ENCODE measurements at regions of chr3 and their contacts with region 1.

Region 1: DNA sequence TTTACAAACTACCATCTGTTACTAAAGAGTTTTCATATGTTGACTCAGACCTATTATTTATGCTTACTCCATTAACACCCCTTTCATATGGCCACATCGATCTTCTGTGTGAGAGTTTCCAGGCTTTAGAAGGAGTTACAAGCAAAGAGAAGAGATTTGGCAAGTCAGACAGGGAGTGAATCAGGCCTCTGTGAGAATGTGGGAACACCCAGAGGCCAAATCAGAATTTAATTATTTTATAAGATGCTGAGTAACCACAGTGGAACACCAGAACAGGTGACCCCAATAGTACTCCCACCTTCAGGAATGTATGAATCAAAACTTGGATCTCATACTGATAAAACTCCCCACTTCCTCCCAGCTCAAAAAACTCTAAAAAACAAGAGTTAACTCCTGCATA is 42.0 kb downstream of the IFT57 start:
- DNase-seq: no peak
- ATAC-seq: no peak
- H3K4me3 Mint-ChIP-seq: no peak overlapping the region
- H3K27ac Mint-ChIP-seq: no peak overlapping the region
- H3K4me1 Mint-ChIP-seq: peaks cover 45% of the 10 kb centered on the region
- H3K27me3 Mint-ChIP-seq: no peaks in the 10 kb centered on the region
- CTCF ChIP-seq: no peak

Region 2: DNA sequence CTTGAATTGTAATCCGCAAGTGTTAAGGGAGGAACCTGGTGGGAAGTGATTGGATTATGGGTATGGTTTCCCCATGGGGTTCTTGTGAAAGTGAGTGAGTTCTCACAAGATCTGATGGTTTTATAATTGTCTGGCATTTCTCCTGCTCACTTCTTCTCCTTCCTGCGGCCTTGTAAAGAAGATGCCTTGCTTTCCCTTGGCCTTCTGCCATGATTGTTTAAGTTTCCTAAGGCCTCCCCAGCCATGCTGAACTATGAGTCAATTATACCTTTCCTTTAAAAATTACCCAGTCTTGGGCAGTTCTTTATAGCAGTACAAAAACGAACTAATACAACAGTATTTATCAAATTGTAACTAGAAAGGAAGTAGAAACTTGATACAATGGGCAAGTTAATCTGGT is 10.2 kb after region 1 on chr3:
- CTCF ChIA-PET with region 1: no interaction called
- POLR2A ChIA-PET with region 1: no interaction called
- intact Hi-C with region 1: loop called (anchors 2 kb)
- DNase-seq: no peak
- ATAC-seq: no peak
- H3K4me3 Mint-ChIP-seq: no peak overlapping the region
- H3K27ac Mint-ChIP-seq: no peak overlapping the region
- H3K4me1 Mint-ChIP-seq: peaks cover 12% of the 10 kb centered on the region
- H3K27me3 Mint-ChIP-seq: no peaks in the 10 kb centered on the region
- CTCF ChIP-seq: no peak

Region 3: GRCh38 chr3:108202837-108203236 is 22.6 kb after region 1 on chr3:
- CTCF ChIA-PET with region 1: no interaction called
- POLR2A ChIA-PET with region 1: no interaction called
- intact Hi-C with region 1: loop called (anchors 2 kb)
- DNase-seq: no peak
- ATAC-seq: no peak
- H3K4me3 Mint-ChIP-seq: no peak overlapping the region
- H3K27ac Mint-ChIP-seq: no peak overlapping the region
- H3K4me1 Mint-ChIP-seq: peaks cover 47% of the 10 kb centered on the region
- H3K27me3 Mint-ChIP-seq: no peaks in the 10 kb centered on the region
- CTCF ChIP-seq: no peak